SK-N-SH (cell line): ENCODE measurements at regions of chr3 and their contacts with region 1.

Region 1: GRCh38 chr3:57120040-57120439 is 45.1 kb downstream of the IL17RD start:
- DNase-seq: peak; percentile 42
- H3K4me3 ChIP-seq: no peak overlapping the region; a peak in 1 of 4 replicates
- H3K27ac ChIP-seq: peak overlapping the region in 1 of 2 experiments; percentile 94; a peak in 2 of 4 replicates
- H3K4me1 ChIP-seq: peaks cover 0 to 49% of the 10 kb centered on the region in 2 experiments; a peak in 2 of 4 replicates
- H3K27me3 ChIP-seq: no peaks in the 10 kb centered on the region
- CTCF ChIP-seq: no peak
- EP300 ChIP-seq: no peak
- RAD21 ChIP-seq: no peak

Region 2: DNA sequence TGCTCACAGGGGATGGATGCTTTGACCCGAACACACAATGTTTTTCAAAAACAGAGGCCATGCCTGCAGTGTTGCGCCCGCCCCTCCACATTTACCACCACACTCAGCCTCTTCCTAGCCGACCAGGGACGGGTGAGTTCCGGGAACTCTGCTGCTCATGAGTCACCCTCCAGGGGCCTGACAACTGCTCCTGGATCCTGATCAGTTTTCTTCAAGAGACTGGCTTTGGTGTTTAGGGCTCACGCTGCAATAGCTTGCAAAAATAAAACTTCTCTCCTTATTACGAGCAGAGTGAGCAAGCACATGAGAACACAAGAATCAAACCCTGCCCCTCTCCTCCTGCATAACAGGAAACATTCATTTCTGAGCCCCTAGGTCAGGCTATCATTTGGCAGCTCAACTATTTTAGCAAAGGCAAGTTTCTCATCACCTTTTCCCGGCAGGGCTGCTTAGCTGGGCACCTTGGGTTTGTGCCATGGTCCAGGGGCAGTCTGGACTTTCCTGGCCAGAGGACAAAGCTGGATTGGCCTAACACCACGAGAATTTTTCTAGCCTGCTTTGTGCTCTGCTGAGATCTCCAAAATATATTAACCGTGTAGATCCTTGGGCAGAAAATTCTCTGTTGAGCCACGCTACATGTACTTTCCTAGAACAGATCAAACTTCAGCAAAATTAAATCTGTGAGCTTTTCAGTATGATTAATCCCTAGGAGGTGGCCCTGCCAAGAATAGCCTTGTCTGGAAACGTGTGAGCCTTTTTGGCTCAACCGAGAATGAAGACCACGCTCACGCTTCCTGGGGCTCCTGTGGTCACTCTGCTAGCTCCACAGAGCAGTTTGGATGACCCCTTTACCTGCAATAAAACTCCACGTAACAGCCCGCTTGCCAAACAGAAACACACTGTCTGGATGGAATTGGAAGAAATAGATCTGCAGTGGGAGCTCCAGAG is 112.3 kb before region 1 on chr3:
- CTCF ChIA-PET with region 1: no interaction called
- POLR2A ChIA-PET with region 1: no interaction called
- DNase-seq: no peak
- H3K4me3 ChIP-seq: peak overlapping the region in 1 of 2 experiments; percentile 38; a peak in 2 of 4 replicates
- H3K27ac ChIP-seq: peak overlapping the region; percentile 84 to 85
- H3K4me1 ChIP-seq: peaks cover 19 to 42% of the 10 kb centered on the region in 2 experiments
- H3K27me3 ChIP-seq: no peaks in the 10 kb centered on the region
- CTCF ChIP-seq: no peak
- EP300 ChIP-seq: peak in 1 of 2 experiments; percentile 32; a peak in 1 of 4 replicates
- RAD21 ChIP-seq: no peak; the same call in 1 of the 2 replicates

Region 3: GRCh38 chr3:57158813-57159738 is 39.0 kb after region 1 on chr3:
- CTCF ChIA-PET with region 1: interaction called, 4 read pairs
- POLR2A ChIA-PET with region 1: interaction called, 12 read pairs
- DNase-seq: no peak
- H3K4me3 ChIP-seq: no peak overlapping the region
- H3K27ac ChIP-seq: peak overlapping the region in 1 of 2 experiments; percentile 78; a peak in 2 of 4 replicates
- H3K4me1 ChIP-seq: peaks cover 7 to 89% of the 10 kb centered on the region in 2 experiments; a peak in 2 of 4 replicates
- H3K27me3 ChIP-seq: no peaks in the 10 kb centered on the region
- CTCF ChIP-seq: no peak
- EP300 ChIP-seq: no peak
- RAD21 ChIP-seq: no peak